ENCODE measurements at regions of chr17 and their contacts with region 1.

Region 1: DNA sequence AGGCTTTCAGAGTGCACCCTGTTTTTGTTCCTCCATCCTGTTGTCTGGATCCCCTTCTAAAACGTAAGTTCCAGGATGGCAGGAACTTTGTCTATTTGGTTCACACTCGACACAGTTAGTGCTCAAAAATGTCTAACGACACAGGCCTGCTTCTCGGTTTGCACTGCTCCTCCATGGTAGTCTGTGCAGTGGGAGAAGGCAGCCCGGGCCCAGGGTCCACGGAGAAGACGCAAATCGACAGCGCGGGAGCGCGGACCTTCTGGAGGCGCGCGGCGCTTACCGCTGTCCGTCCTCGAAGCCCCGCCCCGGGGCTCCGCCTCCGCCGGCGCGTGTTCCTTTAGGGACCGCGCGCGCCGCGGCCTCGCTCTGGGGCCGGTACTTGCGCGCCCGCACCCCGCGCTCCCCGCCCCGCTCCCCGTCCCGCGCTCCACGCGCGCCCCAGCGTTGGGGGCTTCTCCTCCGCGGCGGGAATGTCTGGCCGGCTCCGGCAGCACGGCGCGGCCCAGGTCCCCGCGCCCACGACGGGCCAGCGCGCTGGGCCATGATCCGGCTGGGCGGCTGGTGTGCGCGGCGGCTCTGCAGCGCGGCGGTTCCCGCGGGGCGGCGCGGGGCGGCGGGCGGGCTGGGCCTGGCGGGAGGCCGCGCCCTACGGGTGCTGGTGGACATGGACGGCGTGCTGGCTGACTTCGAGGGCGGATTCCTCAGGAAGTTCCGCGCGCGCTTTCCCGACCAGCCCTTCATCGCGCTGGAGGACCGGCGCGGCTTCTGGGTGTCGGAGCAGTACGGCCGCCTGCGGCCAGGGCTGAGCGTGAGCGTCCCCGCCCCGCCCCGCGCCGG is at the start of gene NT5M:
- DNase-seq: peak; percentile 82 to 86 (median 83)
- ATAC-seq: peak; percentile 88 to 95 (median 92)
- H3K4me3 ChIP-seq: peak within 1 kb of the TSS; percentile 36 to 63 (median 50)
- H3K27ac ChIP-seq: peak within 1 kb of the TSS in 1 of 3 donors; percentile 29
- H3K4me1 ChIP-seq: peaks cover 0 to 10% (median 0%) of the 10 kb centered on the region in 4 donors
- H3K27me3 ChIP-seq: no peaks in the 10 kb centered on the region
- CTCF ChIP-seq: no peak
- POLR2A ChIP-seq: peak; percentile 39
- total RNA-seq, gene NT5M: 0.51 to 3.0 (median 0.87) TPM

Region 2: GRCh38 chr17:16991349-16992009 is 311.7 kb before region 1 on chr17:
- intact Hi-C with region 1: loop called in 1 of 2 experiments (anchors 10 kb)
- DNase-seq: peak; percentile 80 to 85 (median 83)
- ATAC-seq: peak; percentile 74 to 83 (median 79)
- H3K4me3 ChIP-seq: no peak overlapping the region
- H3K27ac ChIP-seq: no peak overlapping the region
- H3K4me1 ChIP-seq: no peaks in the 10 kb centered on the region
- H3K27me3 ChIP-seq: no peaks in the 10 kb centered on the region
- CTCF ChIP-seq: peak; percentile 70 to 83 (median 76)
- POLR2A ChIP-seq: no peak

Region 3: GRCh38 chr17:17119533-17119932 is 183.7 kb before region 1 on chr17:
- intact Hi-C with region 1: no loop called
- DNase-seq: no peak
- ATAC-seq: peak; percentile 19 to 66 (median 44)
- H3K4me3 ChIP-seq: no peak overlapping the region
- H3K27ac ChIP-seq: peak overlapping the region; percentile 46 to 62 (median 49)
- H3K4me1 ChIP-seq: peaks cover 0 to 42% (median 16%) of the 10 kb centered on the region in 4 donors
- H3K27me3 ChIP-seq: no peaks in the 10 kb centered on the region
- CTCF ChIP-seq: no peak
- POLR2A ChIP-seq: no peak

Region 4: GRCh38 chr17:17151962-17152361 is 151.3 kb before region 1 on chr17:
- intact Hi-C with region 1: no loop called
- DNase-seq: peak; percentile 90 to 93 (median 92)
- ATAC-seq: peak; percentile 82 to 84 (median 84)
- H3K4me3 ChIP-seq: no peak overlapping the region
- H3K27ac ChIP-seq: peak overlapping the region; percentile 19 to 46 (median 39)
- H3K4me1 ChIP-seq: peaks cover 0 to 41% (median 17%) of the 10 kb centered on the region in 4 donors
- H3K27me3 ChIP-seq: no peaks in the 10 kb centered on the region
- CTCF ChIP-seq: no peak
- POLR2A ChIP-seq: no peak

Region 5: GRCh38 chr17:17227608-17228501 is 75.4 kb before region 1 on chr17:
- intact Hi-C with region 1: no loop called
- DNase-seq: peak in 2 of 3 donors; percentile 86 to 93
- ATAC-seq: peak; percentile 77 to 93 (median 92)
- H3K4me3 ChIP-seq: no peak overlapping the region
- H3K27ac ChIP-seq: peak overlapping the region in 1 of 3 donors; percentile 67
- H3K4me1 ChIP-seq: peaks cover 0 to 37% (median 21%) of the 10 kb centered on the region in 4 donors
- H3K27me3 ChIP-seq: no peaks in the 10 kb centered on the region
- CTCF ChIP-seq: no peak
- POLR2A ChIP-seq: no peak

Measured in right lobe of liver (tissue), 6 donors.